CD8-positive, alpha-beta memory T cell (primary cell): ENCODE measurements at regions of chr1 and their contacts with region 1.

Region 1: DNA sequence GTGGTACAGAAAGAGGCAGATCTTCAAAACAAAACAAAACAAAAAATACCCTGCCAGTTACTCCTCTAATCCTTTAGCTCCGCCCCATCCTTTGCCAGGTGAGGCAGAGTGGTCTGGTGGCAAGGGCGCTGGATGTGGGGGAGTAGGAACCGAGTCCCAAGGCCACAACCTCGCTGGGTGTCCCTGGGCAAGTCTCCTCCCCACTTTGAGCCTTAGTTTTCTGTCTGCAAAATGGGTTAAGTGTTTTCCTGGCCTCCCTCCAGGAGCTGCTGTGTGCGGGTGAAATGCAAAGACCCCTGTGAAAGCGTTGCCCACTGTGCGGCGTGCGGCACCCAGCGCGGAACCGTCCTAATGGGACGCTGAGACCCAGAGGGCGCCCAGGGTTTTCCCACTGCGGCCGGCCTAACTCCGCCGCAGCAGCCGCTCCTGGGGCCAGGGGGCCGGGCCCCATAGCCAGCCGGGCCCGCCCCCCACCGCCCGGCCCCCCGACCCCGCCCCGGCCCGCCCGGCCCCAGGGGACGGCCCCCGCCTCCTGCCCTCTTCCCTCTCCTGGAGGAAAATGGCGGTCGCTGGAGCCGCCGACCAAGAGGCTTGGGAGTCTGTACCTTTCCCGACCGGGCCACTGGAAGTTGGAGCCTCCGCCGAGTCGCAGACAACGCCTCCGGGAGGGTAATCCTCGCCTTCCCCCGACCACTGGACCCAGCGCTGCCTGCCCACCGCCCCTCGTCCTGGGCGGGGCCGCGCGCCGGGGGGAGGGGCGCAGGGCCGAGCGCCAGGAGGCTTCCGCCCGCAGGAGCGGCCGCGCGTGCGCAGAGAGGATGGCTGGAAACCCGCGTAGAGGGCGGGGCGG is at the starts of genes ERMAP and SVBP:
- DNase-seq: peak; percentile 91 to 95 (median 92)
- H3K4me3 ChIP-seq: peak within 1 kb of the TSS; percentile 60
- H3K4me3 Mint-ChIP-seq: peak within 1 kb of the TSS; percentile 78 to 91 (median 85)
- H3K27ac ChIP-seq: peak within 1 kb of the TSS; percentile 76
- H3K27ac Mint-ChIP-seq: peak within 1 kb of the TSS; percentile 84 to 98 (median 94)
- H3K4me1 ChIP-seq: peaks cover 10% of the 10 kb centered on the region
- H3K4me1 Mint-ChIP-seq: peaks cover 18 to 29% (median 23%) of the 10 kb centered on the region in 3 donors
- H3K27me3 ChIP-seq: no peaks in the 10 kb centered on the region
- H3K27me3 Mint-ChIP-seq: no peaks in the 10 kb centered on the region
- total RNA-seq, gene ERMAP: 3.5 to 3.6 TPM
- total RNA-seq, gene SVBP: 12.6 to 16.4 TPM

Region 2: DNA sequence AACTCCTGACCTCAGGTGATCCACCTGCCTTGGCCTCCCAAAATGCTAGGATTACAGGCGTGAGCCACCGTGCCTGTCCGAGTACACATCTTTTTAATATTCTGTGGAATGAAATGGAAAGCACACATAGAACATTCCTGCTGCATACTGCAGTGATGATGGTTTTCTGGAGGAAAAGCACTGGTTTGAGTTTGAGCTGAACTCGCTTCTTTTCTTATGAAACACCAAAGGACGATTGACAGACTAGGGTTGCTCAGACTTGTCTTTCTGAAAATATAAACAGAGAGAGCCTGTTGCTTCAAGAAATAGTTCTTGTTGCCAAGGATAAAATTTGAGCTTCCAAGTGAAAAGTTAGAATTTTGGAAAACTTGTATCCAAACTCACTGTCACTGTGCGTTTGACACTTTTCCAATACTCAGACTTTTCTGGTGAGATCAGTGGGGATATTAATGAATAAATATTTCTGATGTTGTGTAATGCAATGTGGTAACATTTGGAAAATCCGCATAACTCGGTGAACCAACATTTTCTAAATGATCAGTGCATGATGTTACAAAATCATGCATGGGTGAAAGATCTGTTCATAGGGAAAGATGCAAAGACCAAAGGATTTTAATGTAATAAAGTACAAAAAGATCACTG is 14.9 kb before region 1 on chr1:
- CTCF ChIA-PET with region 1: no interaction called
- POLR2A ChIA-PET with region 1: no interaction called
- DNase-seq: no peak
- H3K4me3 ChIP-seq: no peak overlapping the region
- H3K4me3 Mint-ChIP-seq: no peak overlapping the region
- H3K27ac ChIP-seq: no peak overlapping the region
- H3K27ac Mint-ChIP-seq: no peak overlapping the region
- H3K4me1 ChIP-seq: no peaks in the 10 kb centered on the region
- H3K4me1 Mint-ChIP-seq: peaks cover 0 to 4% (median 1%) of the 10 kb centered on the region in 3 donors
- H3K27me3 ChIP-seq: no peaks in the 10 kb centered on the region
- H3K27me3 Mint-ChIP-seq: peaks cover 0 to 4% of the 10 kb centered on the region in 2 donors

Region 3: GRCh38 chr1:42846257-42847110 is 29.7 kb after region 1 on chr1 and contains the start of gene ZNF691:
- CTCF ChIA-PET with region 1: interaction called, 14 read pairs
- POLR2A ChIA-PET with region 1: interaction called, 7 read pairs
- DNase-seq: peak; percentile 81 to 92 (median 88)
- H3K4me3 ChIP-seq: peak within 1 kb of the TSS; percentile 93
- H3K4me3 Mint-ChIP-seq: peak within 1 kb of the TSS; percentile 91 to 98 (median 96)
- H3K27ac ChIP-seq: peak within 1 kb of the TSS; percentile 79
- H3K27ac Mint-ChIP-seq: peak within 1 kb of the TSS; percentile 66 to 97 (median 90)
- H3K4me1 ChIP-seq: peaks cover 20% of the 10 kb centered on the region
- H3K4me1 Mint-ChIP-seq: peaks cover 34 to 42% (median 39%) of the 10 kb centered on the region in 3 donors
- H3K27me3 ChIP-seq: no peaks in the 10 kb centered on the region
- H3K27me3 Mint-ChIP-seq: no peaks in the 10 kb centered on the region
- total RNA-seq, gene ZNF691: 10.8 TPM